T-cell (primary cell): ENCODE measurements at regions of chrX and their contacts with region 1.

Region 1: DNA sequence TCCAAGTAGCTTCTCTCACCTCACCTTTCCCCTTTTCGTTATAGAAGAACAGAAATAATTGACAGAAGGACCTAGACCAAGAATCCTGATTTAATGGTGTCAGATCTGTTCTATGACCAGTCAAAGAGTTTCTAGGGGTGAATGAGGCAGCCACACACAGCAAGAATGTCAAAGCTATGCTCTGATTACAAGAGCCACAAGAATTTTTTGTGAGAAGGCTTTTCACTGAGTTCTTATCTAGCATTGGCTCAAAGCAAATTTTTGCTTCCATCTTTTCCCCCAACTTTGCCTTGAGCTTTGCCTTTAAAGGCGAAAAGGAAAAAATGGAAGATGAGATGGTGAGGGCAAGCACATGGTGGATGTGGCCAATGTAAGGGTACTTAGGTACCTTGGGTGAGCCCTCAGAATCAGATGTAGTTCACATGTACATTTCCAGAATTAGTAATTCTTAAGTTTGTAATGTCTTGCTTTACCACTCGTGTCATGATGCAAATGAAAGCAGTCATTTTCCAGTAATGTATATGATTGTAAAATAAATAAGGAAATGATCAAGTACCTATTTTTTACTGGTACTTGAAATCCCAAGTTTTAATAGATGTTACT is 23.5 kb downstream of the FMR1 start:
- DNase-seq: no peak
- ATAC-seq: no peak
- H3K4me3 ChIP-seq: no peak overlapping the region
- H3K4me3 Mint-ChIP-seq: no peak overlapping the region
- H3K27ac ChIP-seq: no peak overlapping the region
- H3K27ac Mint-ChIP-seq: no peak overlapping the region
- H3K4me1 ChIP-seq: no peaks in the 10 kb centered on the region
- H3K4me1 Mint-ChIP-seq: peaks cover 0 to 2% (median 0%) of the 10 kb centered on the region in 3 donors
- H3K27me3 ChIP-seq: no peaks in the 10 kb centered on the region
- H3K27me3 Mint-ChIP-seq: no peaks in the 10 kb centered on the region

Region 2: GRCh38 chrX:147914591-147914990 is 20.7 kb before region 1 on chrX:
- CTCF ChIA-PET with region 1: no interaction called
- POLR2A ChIA-PET with region 1: interaction called in 1 of 2 experiments, 10 read pairs
- DNase-seq: no peak
- ATAC-seq: no peak
- H3K4me3 ChIP-seq: no peak overlapping the region
- H3K4me3 Mint-ChIP-seq: peak overlapping the region; percentile 64 to 92 (median 80)
- H3K27ac ChIP-seq: no peak overlapping the region
- H3K27ac Mint-ChIP-seq: peak overlapping the region; percentile 49 to 66
- H3K4me1 ChIP-seq: peaks cover 16 to 22% of the 10 kb centered on the region in 2 experiments
- H3K4me1 Mint-ChIP-seq: peaks cover 38 to 63% (median 59%) of the 10 kb centered on the region in 3 donors
- H3K27me3 ChIP-seq: no peaks in the 10 kb centered on the region
- H3K27me3 Mint-ChIP-seq: no peaks in the 10 kb centered on the region